Heart right ventricle (tissue), 16 donors: ENCODE measurements at regions of chr6 and their contacts with region 1.

Region 1: DNA sequence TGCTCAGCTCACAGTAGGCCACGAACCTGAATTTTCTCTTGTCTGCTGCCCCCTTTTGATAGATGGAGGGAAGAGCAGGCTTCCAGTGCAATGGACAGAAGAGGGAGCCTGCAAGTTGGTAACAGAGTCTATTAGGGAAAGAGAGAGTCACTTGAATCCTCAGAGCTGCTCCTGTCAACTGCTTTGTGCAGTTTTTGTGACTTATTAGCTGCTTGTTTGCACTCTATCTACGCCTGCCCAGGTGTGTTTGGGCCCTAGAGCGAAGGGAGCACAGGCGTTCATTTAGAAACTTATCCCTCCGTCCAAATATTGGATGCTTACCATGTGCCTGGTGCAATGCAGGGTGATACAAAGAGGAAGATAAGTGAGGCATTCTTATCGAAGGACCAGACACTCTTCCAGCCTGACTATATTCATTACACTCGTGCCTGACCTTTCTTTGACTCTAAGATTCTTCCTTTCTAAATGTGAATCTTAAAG is 11.6 kb upstream of the SLC2A12 start:
- DNase-seq: peak in 1 of 2 donors; percentile 68
- ATAC-seq: peak; percentile 76 to 92 (median 87)
- H3K4me3 ChIP-seq: no peak overlapping the region
- H3K27ac ChIP-seq: no peak overlapping the region
- H3K4me1 ChIP-seq: peaks cover 0 to 20% (median 10%) of the 10 kb centered on the region in 9 donors
- H3K27me3 ChIP-seq: no peaks in the 10 kb centered on the region
- CTCF ChIP-seq: peak; percentile 54 to 85 (median 77)

Region 2: GRCh38 chr6:133040094-133040802 is 1023.8 kb before region 1 on chr6:
- intact Hi-C with region 1: no loop called
- DNase-seq: no peak
- ATAC-seq: peak in 2 of 8 donors; percentile 31 to 33
- H3K4me3 ChIP-seq: no peak overlapping the region
- H3K27ac ChIP-seq: peak overlapping the region in 4 of 10 donors; percentile 21 to 65 (median 56)
- H3K4me1 ChIP-seq: peaks cover 0 to 19% (median 0%) of the 10 kb centered on the region in 9 donors
- H3K27me3 ChIP-seq: no peaks in the 10 kb centered on the region
- CTCF ChIP-seq: peak in 7 of 9 donors; percentile 28 to 54 (median 39)

Region 3: DNA sequence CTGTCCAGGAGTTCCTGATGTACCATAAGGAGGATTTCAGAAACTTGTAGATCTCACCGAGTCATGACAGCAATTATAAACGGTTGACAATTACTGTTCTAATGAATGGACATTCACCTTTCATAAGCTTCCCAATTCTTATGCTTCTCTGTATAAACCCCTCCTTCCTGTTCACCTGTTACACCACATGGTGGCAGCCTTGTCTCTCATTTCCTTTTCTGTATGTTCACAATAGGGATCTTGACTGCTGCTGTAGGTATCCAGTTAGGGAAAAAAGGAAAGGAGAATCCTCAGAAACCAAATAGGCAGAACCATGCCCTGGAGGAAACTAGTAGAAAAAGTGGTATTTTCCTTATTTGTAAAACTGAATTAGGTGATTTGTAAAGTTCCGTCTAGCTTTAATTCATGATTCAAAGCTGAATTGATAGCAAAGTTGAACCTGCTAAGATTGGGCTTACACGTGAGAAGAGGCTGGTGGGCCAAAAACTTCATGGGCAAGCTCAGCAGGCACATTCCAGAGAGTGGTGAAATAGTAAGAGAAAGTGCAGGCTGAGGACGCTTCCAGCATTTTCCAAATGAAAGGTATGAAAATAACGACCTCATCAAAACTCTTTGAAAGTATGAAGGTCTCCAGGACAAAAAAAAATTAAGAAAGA is 139.9 kb before region 1 on chr6:
- intact Hi-C with region 1: loop called in 8 of 10 experiments (anchors 1 to 10 kb)
- DNase-seq: peak in 1 of 2 donors; percentile 75
- ATAC-seq: peak; percentile 79 to 93 (median 91)
- H3K4me3 ChIP-seq: no peak overlapping the region
- H3K27ac ChIP-seq: no peak overlapping the region
- H3K4me1 ChIP-seq: no peaks in the 10 kb centered on the region
- H3K27me3 ChIP-seq: peaks cover 0 to 22% (median 3%) of the 10 kb centered on the region in 7 donors
- CTCF ChIP-seq: peak; percentile 69 to 93 (median 87)